HEK293 (cell line): ENCODE measurements at regions of chr5 and their contacts with region 1.

Region 1: GRCh38 chr5:107571621-107572536 is 98.9 kb downstream of the EFNA5 start:
- H3K4me3 ChIP-seq: peak overlapping the region; percentile 27
- H3K27ac ChIP-seq: peak overlapping the region; percentile 67
- H3K4me1 ChIP-seq: peaks cover 57% of the 10 kb centered on the region
- CTCF ChIP-seq: peak; percentile 84

Region 2: GRCh38 chr5:107589520-107590193 is 17.8 kb after region 1 on chr5:
- CTCF ChIA-PET with region 1: interaction called, 10 read pairs
- POLR2A ChIA-PET with region 1: no interaction called
- H3K4me3 ChIP-seq: no peak overlapping the region
- H3K27ac ChIP-seq: no peak overlapping the region
- H3K4me1 ChIP-seq: peaks cover 6% of the 10 kb centered on the region
- CTCF ChIP-seq: no peak

Region 3: DNA sequence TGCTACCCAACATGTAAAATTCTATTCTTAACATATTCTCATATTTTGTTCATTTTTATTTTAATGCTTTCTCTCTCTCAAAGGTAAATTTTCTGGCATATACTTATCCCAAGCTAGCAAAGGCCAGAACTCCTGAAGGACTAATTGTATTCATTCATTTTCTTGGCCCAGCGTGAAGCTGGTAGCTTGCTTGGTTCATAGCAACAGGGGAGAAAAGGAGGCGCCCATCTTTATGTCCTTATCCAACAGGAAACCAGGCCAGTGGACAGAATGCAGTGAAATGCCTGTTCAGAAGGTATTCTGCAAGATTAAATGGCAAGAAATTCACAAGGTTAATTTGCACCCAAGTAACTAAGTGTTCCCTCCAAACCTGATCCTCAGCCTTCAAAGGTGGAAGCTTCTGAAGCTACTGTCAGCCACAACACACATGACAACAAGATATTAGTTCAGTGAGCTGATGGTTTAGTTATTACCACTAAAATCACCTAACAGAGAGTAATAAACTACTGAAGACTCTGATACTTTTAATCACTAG is 93.2 kb after region 1 on chr5:
- CTCF ChIA-PET with region 1: interaction called, 10 read pairs
- POLR2A ChIA-PET with region 1: interaction called, 4 read pairs
- H3K4me3 ChIP-seq: no peak overlapping the region
- H3K27ac ChIP-seq: no peak overlapping the region
- H3K4me1 ChIP-seq: peaks cover 34% of the 10 kb centered on the region
- CTCF ChIP-seq: no peak

Region 4: DNA sequence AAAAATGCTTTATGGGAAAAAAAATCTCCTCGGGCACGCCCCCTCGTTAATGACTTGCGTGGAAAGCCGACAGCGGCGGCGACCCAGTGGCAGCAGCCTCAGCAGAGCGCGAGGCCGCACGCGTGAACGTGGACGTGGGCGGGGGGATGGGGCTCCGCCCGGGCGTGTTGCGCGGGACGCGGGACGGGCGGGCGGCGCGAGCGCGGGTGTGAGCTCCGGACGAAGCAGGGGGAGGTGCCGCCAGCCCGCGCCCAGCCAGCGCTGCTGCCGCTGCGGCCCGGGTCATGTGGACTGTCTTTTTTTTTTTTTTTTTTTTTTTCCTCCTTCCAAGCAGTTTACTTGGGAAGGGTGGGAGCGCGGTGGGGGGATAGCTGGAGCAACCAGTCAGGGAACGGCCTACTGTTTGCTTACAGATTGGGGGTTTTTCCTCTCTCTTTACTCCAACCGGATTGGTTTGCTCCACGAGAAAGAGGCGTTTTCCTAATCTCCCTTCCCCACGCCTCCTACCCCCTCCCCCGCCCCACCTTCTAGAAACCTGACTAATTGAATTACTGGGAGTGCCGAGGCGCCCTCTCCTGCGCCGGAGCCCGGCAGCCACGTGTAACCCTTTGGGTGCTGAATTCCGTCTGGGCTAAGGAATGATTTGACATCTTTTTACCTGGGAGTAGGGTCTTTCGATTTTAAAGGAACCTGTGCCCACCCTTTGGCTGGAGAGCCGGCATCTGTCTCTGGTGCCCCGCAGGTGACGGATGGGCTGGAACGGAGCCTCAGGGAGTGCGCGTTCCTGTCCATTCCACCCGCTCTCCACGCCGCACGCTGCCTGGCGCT is 100.5 kb after region 1 on chr5:
- CTCF ChIA-PET with region 1: interaction called, 5 read pairs
- POLR2A ChIA-PET with region 1: interaction called, 17 read pairs
- H3K4me3 ChIP-seq: peak overlapping the region; percentile 64
- H3K27ac ChIP-seq: peak overlapping the region; percentile 99
- H3K4me1 ChIP-seq: peaks cover 4% of the 10 kb centered on the region
- CTCF ChIP-seq: peak; percentile 15; the same call in 1 of the 2 replicates